MCF 10A (cell line): ENCODE measurements at regions of chr17 and their contacts with region 1.

Region 1: GRCh38 chr17:752002-752619 is at the start of gene GEMIN4:
- DNase-seq: peak; percentile 88
- H3K4me3 Mint-ChIP-seq: peak within 1 kb of the TSS; percentile 98
- H3K27ac Mint-ChIP-seq: peak within 1 kb of the TSS; percentile 93
- H3K4me1 Mint-ChIP-seq: peaks cover 18% of the 10 kb centered on the region
- H3K27me3 Mint-ChIP-seq: no peaks in the 10 kb centered on the region
- CTCF ChIP-seq: peak; percentile 97
- total RNA-seq, gene GEMIN4: 19.5 and 24.1 TPM in 2 replicates

Region 2: DNA sequence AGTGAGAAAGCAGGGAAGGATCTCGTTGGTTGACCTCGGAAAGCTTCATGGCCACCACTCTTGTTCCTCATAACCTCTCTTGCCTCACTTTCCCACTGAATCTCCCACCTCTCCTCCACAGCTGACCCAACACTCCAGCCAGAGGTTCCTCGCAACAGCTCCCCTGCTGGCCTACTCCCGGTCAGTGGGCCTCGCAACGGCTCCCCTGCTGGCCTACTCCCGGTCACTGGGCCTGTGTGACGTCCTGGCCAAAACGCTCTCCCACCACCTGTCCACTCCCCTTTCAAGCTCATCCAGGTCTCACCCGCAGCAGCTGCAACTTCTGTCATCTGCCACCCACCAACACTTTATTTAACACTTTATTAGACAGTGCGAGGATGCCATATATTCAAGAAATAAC is 186.6 kb before region 1 on chr17:
- CTCF ChIA-PET with region 1: no interaction called
- POLR2A ChIA-PET with region 1: no interaction called
- intact Hi-C with region 1: no loop called
- DNase-seq: no peak
- H3K4me3 Mint-ChIP-seq: no peak overlapping the region
- H3K27ac Mint-ChIP-seq: no peak overlapping the region
- H3K4me1 Mint-ChIP-seq: no peaks in the 10 kb centered on the region
- H3K27me3 Mint-ChIP-seq: no peaks in the 10 kb centered on the region
- CTCF ChIP-seq: no peak

Region 3: DNA sequence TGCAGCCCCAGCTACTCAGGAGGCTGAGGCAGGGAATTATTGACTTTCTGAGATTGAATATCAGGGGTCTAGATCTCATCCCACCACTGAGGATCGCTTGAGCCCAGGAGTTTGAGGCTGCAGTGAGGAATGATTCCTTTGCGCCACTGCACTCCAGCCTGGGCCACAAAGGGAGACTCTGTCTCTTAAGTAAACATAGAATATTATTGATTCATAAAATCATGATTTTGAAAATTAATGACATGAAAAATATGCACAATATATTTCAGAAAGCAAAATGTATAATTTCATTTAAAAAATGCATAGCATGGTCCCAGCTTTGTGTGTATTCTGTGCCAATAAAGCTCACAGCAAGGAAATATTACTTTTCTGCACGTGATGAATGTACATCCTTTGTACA is 35.9 kb before region 1 on chr17:
- CTCF ChIA-PET with region 1: interaction called, 6 read pairs
- POLR2A ChIA-PET with region 1: interaction called, 31 read pairs
- intact Hi-C with region 1: loop called (anchors 5 kb)
- DNase-seq: no peak
- H3K4me3 Mint-ChIP-seq: no peak overlapping the region
- H3K27ac Mint-ChIP-seq: no peak overlapping the region
- H3K4me1 Mint-ChIP-seq: peaks cover 14% of the 10 kb centered on the region
- H3K27me3 Mint-ChIP-seq: no peaks in the 10 kb centered on the region
- CTCF ChIP-seq: no peak